ENCODE measurements at regions of chr4 and their contacts with region 1.

Region 1: DNA sequence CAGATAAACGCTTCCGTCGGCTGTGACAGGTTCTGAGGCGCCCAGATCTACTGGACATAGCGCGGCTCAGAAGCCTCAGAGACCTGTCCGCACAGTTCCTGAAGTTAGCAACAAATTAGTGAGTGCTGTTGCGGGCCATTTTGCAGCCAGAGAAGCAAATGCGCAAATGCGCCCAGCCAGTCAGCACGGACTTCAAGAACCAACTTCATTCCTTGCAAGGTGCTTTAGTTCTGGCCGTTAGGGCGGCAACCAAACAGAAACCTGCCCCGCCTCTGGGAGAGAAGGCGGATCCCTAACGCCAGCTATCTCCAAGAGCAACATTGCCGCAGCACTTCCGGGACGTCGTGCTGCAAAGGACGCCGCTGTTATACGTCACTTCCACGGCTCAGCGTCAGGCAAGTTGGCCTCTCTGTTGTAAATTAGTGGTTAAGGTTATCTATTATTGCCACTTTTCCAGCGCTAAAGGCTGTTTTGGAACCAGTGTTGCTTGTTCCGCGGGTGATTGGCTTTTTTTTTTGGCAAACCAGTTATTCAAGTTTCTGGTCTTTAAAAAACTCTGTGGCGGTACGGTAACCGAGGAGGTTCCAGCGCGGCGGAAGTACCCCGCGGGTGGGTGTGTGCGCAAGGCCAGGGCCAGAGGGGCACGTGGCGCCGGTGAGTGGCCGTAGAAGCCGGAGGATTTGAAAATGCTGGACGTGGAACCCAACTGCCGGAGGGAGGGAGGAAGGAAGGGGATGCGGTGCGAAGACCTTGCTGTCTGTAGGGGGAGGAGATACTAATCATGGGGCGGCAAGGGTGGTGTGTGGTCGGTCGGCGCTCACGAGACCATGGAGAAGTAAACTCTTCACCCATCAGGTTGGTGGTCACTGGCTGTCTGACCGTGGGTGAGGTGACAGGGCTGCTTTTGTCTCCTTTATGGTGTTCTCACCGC is at the start of gene GAR1:
- DNase-seq: peak; percentile 84 to 90
- ATAC-seq: peak; percentile 98 to 100 (median 100)
- H3K4me3 ChIP-seq: peak within 1 kb of the TSS; percentile 65 to 94 (median 78)
- H3K27ac ChIP-seq: peak within 1 kb of the TSS in 9 of 10 donors; percentile 69 to 90 (median 85)
- H3K4me1 ChIP-seq: peaks cover 0 to 25% (median 17%) of the 10 kb centered on the region in 9 donors
- H3K27me3 ChIP-seq: no peaks in the 10 kb centered on the region
- CTCF ChIP-seq: peak in 1 of 9 donors; percentile 21
- total RNA-seq, gene GAR1: 6.8 to 12.3 (median 9.2) TPM

Region 2: DNA sequence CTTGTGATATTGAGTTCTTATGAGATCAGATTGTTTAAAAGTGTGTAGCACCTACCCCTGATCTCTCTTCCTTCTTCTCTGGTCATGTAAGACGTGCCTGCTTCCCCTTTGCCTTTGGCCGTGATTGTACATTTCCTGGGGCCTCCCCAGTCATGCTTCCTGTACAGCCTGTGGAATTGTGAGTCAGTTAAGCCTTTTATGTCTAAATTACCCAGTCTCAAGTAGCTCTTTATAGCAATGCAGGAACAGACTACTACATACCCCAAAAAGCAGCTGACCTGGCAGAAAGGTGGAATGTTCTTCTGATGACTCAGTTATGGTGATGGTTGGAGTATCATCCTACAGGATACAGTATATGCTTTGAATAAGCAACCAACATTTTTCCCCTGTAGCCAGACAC is 266.8 kb before region 1 on chr4:
- intact Hi-C with region 1: loop called in 2 of 10 experiments (anchors 10 kb)
- DNase-seq: peak in 1 of 2 donors; percentile 22
- ATAC-seq: peak in 7 of 8 donors; percentile 17 to 86 (median 74)
- H3K4me3 ChIP-seq: no peak overlapping the region
- H3K27ac ChIP-seq: peak overlapping the region in 5 of 10 donors; percentile 17 to 58 (median 23)
- H3K4me1 ChIP-seq: peaks cover 0 to 20% (median 0%) of the 10 kb centered on the region in 9 donors
- H3K27me3 ChIP-seq: no peaks in the 10 kb centered on the region
- CTCF ChIP-seq: no peak

Region 3: GRCh38 chr4:109559983-109560686 is 255.3 kb before region 1 on chr4 and contains the start of gene MCUB:
- intact Hi-C with region 1: loop called in 1 of 10 experiments (anchors 10 kb)
- DNase-seq: peak; percentile 85 to 88
- ATAC-seq: peak; percentile 97 to 99 (median 98)
- H3K4me3 ChIP-seq: peak within 1 kb of the TSS; percentile 58 to 87 (median 74)
- H3K27ac ChIP-seq: peak within 1 kb of the TSS; percentile 69 to 94 (median 86)
- H3K4me1 ChIP-seq: peaks cover 0 to 24% (median 11%) of the 10 kb centered on the region in 9 donors
- H3K27me3 ChIP-seq: peaks cover 0 to 3% (median 0%) of the 10 kb centered on the region in 7 donors
- CTCF ChIP-seq: no peak
- total RNA-seq, gene MCUB: 1.7 to 12.6 (median 3.3) TPM

Region 4: DNA sequence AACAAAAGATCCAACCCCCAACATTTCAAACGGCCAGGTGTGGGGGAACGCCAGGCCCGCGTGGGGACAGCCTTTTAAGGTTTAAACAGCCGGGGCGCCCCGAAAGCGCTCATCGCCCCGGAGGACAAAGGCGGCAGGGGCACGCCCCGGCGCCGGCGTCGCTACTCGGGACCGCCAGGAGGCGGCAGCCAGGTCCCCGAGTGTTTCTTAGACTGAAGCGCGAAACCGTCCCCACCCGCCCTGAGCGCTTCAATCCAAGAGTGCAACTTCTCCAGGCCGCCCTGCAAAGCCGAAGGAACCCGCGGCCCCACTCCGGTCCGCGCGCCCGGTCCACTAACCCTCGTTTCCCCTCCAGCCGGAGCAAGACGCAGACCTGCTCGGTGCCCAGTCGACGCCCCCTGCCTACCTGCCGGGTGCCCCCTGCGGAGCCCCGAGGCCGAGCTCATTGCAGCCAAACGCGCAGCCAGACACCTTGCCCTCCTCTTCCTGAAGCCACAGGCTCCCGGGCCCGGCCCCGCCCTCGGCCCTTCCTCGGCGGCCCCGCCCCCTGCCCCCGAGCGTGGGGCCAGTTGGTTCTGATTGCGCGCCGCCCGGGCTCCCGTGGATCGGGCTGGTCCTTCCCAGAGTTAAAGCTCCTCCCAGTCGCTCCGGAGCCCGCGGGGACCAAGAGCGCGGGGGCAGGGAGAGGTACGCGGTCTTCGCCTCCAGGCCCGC is 112.3 kb before region 1 on chr4 and contains the start of gene CASP6:
- intact Hi-C with region 1: loop called in 8 of 10 experiments (anchors 2 to 10 kb)
- DNase-seq: peak; percentile 85 to 89
- ATAC-seq: peak; percentile 93 to 98 (median 96)
- H3K4me3 ChIP-seq: peak within 1 kb of the TSS; percentile 64 to 96 (median 86)
- H3K27ac ChIP-seq: peak within 1 kb of the TSS; percentile 63 to 87 (median 81)
- H3K4me1 ChIP-seq: peaks cover 2 to 26% (median 15%) of the 10 kb centered on the region in 9 donors
- H3K27me3 ChIP-seq: no peaks in the 10 kb centered on the region
- CTCF ChIP-seq: peak; percentile 59 to 88 (median 78)
- total RNA-seq, gene CASP6: 3.0 to 10.2 (median 6.2) TPM

Region 5: DNA sequence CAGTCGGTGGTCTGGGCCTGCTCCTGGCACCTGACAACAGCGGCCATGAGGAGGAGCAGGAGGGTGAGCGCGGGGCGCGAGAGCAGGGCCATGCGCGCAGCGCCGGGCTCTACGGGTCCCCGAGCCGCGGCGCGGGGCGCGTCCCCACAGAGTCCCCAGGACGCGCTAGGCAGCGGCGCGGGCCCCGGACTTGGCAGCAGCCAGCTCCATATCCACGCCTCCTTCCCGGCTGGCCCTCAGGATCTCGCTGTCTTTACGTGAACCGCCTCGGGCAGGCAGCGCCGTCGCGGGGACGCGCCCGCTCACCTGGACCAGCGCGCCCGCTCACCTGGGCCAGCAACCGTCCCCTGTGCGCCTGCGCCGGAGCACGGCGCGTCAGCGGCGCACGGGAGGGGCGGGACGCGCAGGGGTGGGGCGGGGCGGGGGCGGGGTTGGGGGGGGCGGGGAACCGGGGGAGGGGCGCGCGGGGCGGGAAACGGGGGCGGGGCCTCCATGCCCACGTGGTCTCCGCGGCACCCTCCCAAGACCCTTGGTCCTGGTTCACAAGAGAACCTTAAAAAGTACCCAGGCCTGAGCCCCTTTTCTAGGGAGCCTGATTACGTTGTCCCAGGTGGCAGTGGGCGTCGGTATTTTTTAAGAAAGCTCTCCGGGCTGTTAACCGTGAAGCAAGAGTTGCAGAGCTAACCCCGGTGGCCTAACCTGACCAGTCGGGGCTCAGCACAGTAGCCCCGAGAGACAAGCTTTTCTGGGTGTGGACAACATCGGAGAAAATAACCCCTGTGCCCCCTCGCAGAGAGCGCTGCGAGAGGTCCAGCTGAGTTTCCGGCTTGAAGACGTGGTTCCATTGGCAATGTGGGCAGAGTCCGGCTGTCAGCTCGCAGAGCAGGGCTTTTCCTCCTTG is 85.4 kb before region 1 on chr4 and contains the start of gene PLA2G12A:
- intact Hi-C with region 1: loop called in 2 of 10 experiments (anchors 5 kb)
- DNase-seq: peak; percentile 46 to 67
- ATAC-seq: peak; percentile 93 to 98 (median 96)
- H3K4me3 ChIP-seq: peak within 1 kb of the TSS; percentile 72 to 100 (median 92)
- H3K27ac ChIP-seq: peak within 1 kb of the TSS; percentile 28 to 92 (median 83)
- H3K4me1 ChIP-seq: peaks cover 0 to 24% (median 14%) of the 10 kb centered on the region in 9 donors
- H3K27me3 ChIP-seq: no peaks in the 10 kb centered on the region
- CTCF ChIP-seq: no peak
- total RNA-seq, gene PLA2G12A: 39.4 to 100 (median 50.3) TPM

Region 6: DNA sequence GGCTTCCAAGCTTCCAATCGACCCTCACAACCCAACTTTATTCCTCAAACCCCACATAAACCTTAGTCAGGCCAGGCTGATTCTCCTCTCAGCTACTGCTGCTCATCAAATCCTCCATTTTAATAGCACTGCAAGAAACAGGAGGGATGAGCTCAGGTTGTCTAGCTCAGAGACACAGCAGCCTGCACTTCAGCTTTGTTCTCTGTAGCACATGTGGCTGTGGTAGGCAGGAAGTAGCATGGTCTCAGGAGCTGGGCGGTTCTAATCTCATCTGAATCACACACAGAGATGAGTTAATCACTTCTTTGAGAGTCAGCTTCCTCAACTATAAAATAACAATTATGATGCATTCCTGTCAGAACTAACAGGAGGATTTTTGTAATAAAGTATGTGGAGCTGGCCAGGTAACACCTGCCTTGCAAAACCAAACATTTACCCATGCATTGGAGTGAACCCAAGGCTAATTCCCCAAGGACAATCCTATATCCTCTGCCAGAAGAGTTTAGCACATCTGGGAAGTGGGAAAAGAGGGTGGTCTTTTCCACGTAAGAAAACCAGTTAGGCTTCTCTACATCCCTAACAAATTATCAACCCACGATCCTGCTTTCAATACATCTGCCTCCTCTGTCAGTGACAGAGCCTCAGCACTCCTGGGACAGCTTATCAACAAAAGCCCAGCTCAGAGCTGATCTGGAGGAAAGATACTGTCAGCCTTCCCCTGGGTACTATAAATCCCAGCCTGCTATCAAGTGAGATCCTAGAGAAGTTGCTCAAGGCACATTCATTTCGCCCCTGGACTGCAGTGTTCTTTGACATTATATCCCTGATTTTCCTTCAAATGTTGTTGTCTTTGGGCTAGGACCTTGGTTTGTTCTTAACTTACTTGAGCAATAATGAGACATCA is 350.2 kb after region 1 on chr4:
- intact Hi-C with region 1: no loop called
- DNase-seq: no peak
- ATAC-seq: no peak
- H3K4me3 ChIP-seq: no peak overlapping the region
- H3K27ac ChIP-seq: peak overlapping the region in 1 of 10 donors; percentile 66
- H3K4me1 ChIP-seq: peaks cover 0 to 19% (median 0%) of the 10 kb centered on the region in 9 donors
- H3K27me3 ChIP-seq: no peaks in the 10 kb centered on the region
- CTCF ChIP-seq: no peak